Natural killer cell (primary cell): ENCODE measurements at regions of chr12 and their contacts with region 1.

Region 1: DNA sequence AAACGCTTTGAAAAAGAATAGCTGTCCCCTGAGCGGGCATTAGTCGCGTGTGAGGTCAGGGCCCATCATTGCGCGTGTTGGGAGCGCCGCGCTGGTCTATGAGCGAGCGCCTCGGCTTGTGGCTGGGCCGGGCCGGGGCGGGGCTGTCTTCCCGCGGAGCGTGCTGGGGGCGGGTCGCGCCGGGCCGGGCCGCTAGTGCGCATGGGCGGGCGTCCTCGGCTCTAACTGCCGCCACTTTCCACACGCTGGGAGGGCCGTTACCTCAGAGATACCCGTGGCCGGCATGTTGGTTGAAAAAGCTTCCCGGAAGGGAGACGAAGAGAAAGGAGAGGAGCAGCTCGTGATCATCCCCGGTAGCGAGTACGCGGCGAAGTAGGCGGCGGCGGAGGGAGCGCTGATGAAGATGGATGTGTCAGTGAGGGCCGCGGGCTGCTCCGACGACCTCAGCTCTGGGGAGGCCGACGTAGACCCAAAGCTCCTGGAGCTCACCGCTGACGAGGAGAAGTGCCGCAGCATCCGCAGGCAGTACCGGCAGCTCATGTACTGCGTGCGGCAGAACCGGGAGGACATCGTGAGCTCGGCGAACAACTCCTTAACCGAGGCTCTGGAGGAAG is at the start of gene EID3:
- DNase-seq: peak; percentile 92
- ATAC-seq: peak; percentile 98 to 99 (median 98)
- H3K4me3 ChIP-seq: peak within 1 kb of the TSS; percentile 60
- H3K4me3 Mint-ChIP-seq: peak within 1 kb of the TSS; percentile 98
- H3K27ac ChIP-seq: peak within 1 kb of the TSS; percentile 73
- H3K27ac Mint-ChIP-seq: peak within 1 kb of the TSS; percentile 94 to 96
- H3K4me1 ChIP-seq: peaks cover 11% of the 10 kb centered on the region
- H3K4me1 Mint-ChIP-seq: peaks cover 45 to 50% of the 10 kb centered on the region in 2 donors
- H3K27me3 ChIP-seq: no peaks in the 10 kb centered on the region
- H3K27me3 Mint-ChIP-seq: no peaks in the 10 kb centered on the region
- CTCF ChIP-seq: no peak
- total RNA-seq, gene EID3: 10.4 to 13.0 (median 12.7) TPM

Region 2: GRCh38 chr12:104137913-104138796 is 165.5 kb before region 1 on chr12 and contains the start of gene NFYB:
- intact Hi-C with region 1: loop called (anchors 2 kb)
- DNase-seq: peak; percentile 88 to 97
- ATAC-seq: peak; percentile 94 to 98 (median 94)
- H3K4me3 ChIP-seq: peak within 1 kb of the TSS; percentile 54
- H3K4me3 Mint-ChIP-seq: peak within 1 kb of the TSS; percentile 74
- H3K27ac ChIP-seq: peak within 1 kb of the TSS; percentile 60
- H3K27ac Mint-ChIP-seq: peak within 1 kb of the TSS; percentile 28 to 63
- H3K4me1 ChIP-seq: peaks cover 12% of the 10 kb centered on the region
- H3K4me1 Mint-ChIP-seq: no peaks in the 10 kb centered on the region
- H3K27me3 ChIP-seq: no peaks in the 10 kb centered on the region
- H3K27me3 Mint-ChIP-seq: peaks cover 0 to 3% of the 10 kb centered on the region in 2 donors
- CTCF ChIP-seq: no peak
- total RNA-seq, gene NFYB: 13.3 to 17.4 (median 13.6) TPM

Region 3: DNA sequence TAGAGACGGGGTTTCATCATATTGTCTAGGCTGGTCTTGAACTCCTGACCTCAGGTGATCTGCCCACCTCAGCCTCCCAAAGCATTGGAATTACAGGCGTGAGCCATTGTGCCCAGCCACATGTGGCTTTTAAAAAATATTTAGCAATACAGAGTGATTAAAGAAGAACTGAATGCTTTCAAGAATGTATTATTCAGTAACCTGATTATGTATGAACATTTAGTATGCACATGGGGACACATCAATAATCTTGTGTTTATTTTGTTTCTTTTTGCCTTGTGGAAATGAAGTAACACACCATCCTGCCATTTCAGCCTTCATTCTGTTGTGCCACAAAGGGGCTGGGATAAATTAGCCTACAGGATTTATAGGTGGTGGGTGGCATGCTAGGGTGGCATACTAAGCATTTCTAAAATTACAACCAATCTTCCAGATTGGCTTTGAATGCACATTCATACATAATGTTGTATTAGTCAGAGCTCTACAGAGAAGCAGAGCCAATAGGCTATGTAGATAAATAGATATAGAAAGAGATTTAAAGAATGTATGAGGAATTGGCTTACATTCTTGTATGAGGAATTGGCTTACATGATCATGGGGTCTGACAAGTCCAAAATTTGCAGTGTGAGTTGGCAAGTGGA is 113.6 kb before region 1 on chr12:
- intact Hi-C with region 1: no loop called
- DNase-seq: no peak
- ATAC-seq: no peak
- H3K4me3 ChIP-seq: no peak overlapping the region
- H3K4me3 Mint-ChIP-seq: no peak overlapping the region
- H3K27ac ChIP-seq: no peak overlapping the region
- H3K27ac Mint-ChIP-seq: no peak overlapping the region
- H3K4me1 ChIP-seq: no peaks in the 10 kb centered on the region
- H3K4me1 Mint-ChIP-seq: no peaks in the 10 kb centered on the region
- H3K27me3 ChIP-seq: no peaks in the 10 kb centered on the region
- H3K27me3 Mint-ChIP-seq: peaks cover 0 to 4% of the 10 kb centered on the region in 2 donors
- CTCF ChIP-seq: no peak

Region 4: DNA sequence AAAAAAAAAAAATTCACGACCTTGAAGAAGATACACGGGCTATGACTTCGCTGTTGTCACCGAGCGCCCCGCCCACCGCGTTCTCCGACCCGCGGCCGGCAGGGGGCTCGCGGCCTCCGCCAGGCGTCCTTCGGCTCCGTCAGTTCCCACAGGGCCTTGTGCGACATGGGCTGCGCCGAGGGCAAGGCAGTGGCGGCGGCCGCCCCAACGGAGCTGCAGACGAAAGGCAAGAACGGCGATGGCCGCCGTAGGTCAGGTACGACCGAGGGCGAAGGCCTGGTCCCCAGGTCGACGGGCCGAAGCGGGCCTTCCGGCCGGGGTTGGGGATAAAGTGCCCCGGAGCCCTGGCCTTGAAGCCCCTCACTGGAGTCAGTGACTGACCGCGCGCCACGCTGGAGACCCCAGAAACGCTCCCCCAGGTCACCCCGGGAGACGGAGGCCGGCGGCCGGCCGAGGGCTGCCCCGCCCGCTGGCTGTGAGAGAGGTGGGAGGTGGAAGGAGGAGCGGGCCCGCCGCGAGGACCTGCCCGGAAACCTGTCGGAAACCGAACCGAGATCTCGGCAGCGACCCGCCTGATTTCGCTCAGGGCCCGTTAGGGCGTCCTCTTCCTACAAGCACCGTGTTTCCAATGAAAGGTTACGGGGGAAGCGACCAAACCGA is 87.9 kb before region 1 on chr12 and contains the start of gene TXNRD1:
- intact Hi-C with region 1: loop called (anchors 5 kb)
- DNase-seq: peak; percentile 78 to 92
- ATAC-seq: peak; percentile 94 to 98 (median 98)
- H3K4me3 ChIP-seq: peak within 1 kb of the TSS; percentile 71
- H3K4me3 Mint-ChIP-seq: peak within 1 kb of the TSS; percentile 87
- H3K27ac ChIP-seq: peak within 1 kb of the TSS; percentile 37
- H3K27ac Mint-ChIP-seq: peak within 1 kb of the TSS in 1 of 2 donors; percentile 89
- H3K4me1 ChIP-seq: peaks cover 15% of the 10 kb centered on the region
- H3K4me1 Mint-ChIP-seq: peaks cover 10 to 20% of the 10 kb centered on the region in 2 donors
- H3K27me3 ChIP-seq: no peaks in the 10 kb centered on the region
- H3K27me3 Mint-ChIP-seq: peaks cover 0 to 5% of the 10 kb centered on the region in 2 donors
- CTCF ChIP-seq: peak; percentile 81
- total RNA-seq, gene TXNRD1: 46.9 to 59.7 (median 47.3) TPM